T-cell (primary cell): ENCODE measurements at regions of chr2 and their contacts with region 1.

Region 1: DNA sequence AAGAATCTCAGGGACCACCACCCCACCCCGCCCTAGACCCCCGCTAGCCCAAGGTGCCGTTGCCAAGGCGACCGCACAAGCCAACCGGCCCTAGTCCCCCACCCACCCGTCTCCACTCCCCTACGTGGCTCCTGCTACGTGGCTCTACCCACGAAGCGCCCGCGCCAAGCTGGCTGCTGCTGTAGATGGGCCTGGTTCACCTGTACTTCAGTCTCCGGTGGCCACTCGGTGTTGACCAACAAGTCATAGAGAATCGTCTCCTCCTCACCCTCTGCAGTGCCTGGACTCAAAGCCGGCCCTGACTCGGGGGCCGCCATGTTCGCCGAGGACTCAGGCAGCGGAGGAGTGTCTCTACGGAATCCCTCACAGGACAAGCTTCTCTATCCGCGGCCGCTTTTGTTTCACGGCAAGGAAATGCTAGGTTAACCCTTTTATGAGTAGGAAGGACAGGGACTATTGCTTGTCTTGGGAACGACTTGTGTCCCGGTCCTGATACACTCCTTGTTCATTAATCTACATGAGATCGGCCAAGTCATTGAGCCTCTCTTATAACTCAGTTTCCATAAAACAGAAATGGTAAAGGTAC is at the start of gene NBAS:
- DNase-seq: peak; percentile 45 to 84 (median 69)
- ATAC-seq: peak; percentile 83 to 89 (median 88)
- H3K4me3 ChIP-seq: peak within 1 kb of the TSS; percentile 83 to 91
- H3K4me3 Mint-ChIP-seq: peak within 1 kb of the TSS; percentile 98 to 100 (median 100)
- H3K27ac ChIP-seq: peak within 1 kb of the TSS; percentile 72
- H3K27ac Mint-ChIP-seq: peak within 1 kb of the TSS; percentile 87 to 96
- H3K4me1 ChIP-seq: peaks cover 12 to 16% of the 10 kb centered on the region in 2 experiments
- H3K4me1 Mint-ChIP-seq: peaks cover 39 to 53% (median 41%) of the 10 kb centered on the region in 3 donors
- H3K27me3 ChIP-seq: no peaks in the 10 kb centered on the region
- H3K27me3 Mint-ChIP-seq: peaks cover 0 to 3% of the 10 kb centered on the region in 2 donors
- total RNA-seq, gene NBAS: 32.0 to 36.6 (median 33.1) TPM

Region 2: GRCh38 chr2:14577843-14578242 is 983.2 kb before region 1 on chr2:
- CTCF ChIA-PET with region 1: interaction called in 1 of 2 experiments, 10 read pairs
- POLR2A ChIA-PET with region 1: no interaction called
- DNase-seq: no peak
- ATAC-seq: no peak
- H3K4me3 ChIP-seq: no peak overlapping the region
- H3K4me3 Mint-ChIP-seq: no peak overlapping the region
- H3K27ac ChIP-seq: no peak overlapping the region
- H3K27ac Mint-ChIP-seq: no peak overlapping the region
- H3K4me1 ChIP-seq: no peaks in the 10 kb centered on the region
- H3K4me1 Mint-ChIP-seq: no peaks in the 10 kb centered on the region
- H3K27me3 ChIP-seq: no peaks in the 10 kb centered on the region
- H3K27me3 Mint-ChIP-seq: no peaks in the 10 kb centered on the region

Region 3: DNA sequence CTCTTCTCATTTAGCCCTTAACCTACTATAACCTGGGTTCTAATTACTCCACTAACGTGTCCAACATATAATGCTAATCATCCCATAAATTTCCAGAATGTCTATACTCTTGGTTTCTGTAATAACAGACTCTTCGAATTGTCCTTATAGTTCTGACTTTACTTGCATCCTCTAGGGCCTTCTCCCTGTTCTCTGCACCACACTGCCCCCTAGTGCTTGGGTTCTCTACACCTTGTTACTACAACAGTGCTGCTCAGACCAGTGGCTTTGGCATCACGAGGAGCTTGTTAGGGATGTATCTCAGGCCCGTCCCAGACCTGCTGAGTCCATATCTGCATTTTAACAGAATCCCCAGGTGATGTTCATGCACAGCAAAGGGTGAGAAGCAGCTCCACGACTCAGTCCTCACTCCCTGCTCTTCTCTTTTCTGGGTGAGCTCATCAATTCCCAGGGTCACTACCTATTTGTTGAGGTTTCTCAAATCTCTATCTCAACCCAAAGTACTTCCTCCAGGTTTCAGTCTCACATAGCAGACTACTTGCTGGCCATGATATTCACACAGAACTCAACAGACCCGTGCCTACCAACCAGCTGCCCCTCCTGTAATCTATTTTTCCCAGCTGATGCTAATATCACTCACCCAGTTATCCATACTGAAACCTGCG is 16.1 kb after region 1 on chr2:
- CTCF ChIA-PET with region 1: interaction called, 5 to 18 read pairs
- POLR2A ChIA-PET with region 1: no interaction called
- DNase-seq: peak; percentile 57 to 91 (median 82)
- ATAC-seq: peak; percentile 92 to 99 (median 95)
- H3K4me3 ChIP-seq: no peak overlapping the region
- H3K4me3 Mint-ChIP-seq: no peak overlapping the region
- H3K27ac ChIP-seq: no peak overlapping the region
- H3K27ac Mint-ChIP-seq: no peak overlapping the region
- H3K4me1 ChIP-seq: peaks cover 0 to 2% of the 10 kb centered on the region in 2 experiments
- H3K4me1 Mint-ChIP-seq: no peaks in the 10 kb centered on the region
- H3K27me3 ChIP-seq: peaks cover 0 to 3% of the 10 kb centered on the region in 2 experiments
- H3K27me3 Mint-ChIP-seq: peaks cover 5 to 9% of the 10 kb centered on the region in 2 donors

Region 4: DNA sequence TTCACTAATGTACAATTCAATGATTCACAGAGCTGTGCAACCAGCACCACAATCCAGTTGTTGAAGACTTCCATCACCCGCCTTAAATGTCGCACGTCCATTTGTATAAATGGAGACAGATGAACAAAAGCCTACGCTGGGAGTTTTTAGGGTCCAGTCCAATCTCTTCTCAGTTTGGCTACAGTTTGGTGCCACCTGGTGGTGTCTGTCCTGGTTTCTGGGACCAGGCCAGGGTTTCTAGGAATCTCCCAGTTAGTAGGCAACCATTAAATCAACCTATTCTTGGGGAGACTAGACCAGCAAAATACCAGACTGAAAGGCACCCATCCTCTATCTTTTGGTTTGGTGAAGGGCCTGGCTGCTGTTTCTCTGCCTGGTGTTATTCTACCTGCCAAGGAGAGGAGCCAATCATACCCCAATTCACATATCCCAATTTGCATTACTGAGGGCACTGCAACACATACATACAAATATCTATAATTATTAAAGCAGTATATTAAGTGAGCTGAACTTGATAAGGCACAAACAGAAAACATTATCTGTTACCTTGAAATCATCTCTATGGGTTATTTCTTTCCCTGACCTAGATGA is 27.3 kb after region 1 on chr2:
- CTCF ChIA-PET with region 1: no interaction called
- POLR2A ChIA-PET with region 1: interaction called, 3 to 19 read pairs
- DNase-seq: peak in 12 of 35 experiments; percentile 2 to 35 (median 8)
- ATAC-seq: no peak
- H3K4me3 ChIP-seq: no peak overlapping the region
- H3K4me3 Mint-ChIP-seq: no peak overlapping the region
- H3K27ac ChIP-seq: no peak overlapping the region
- H3K27ac Mint-ChIP-seq: no peak overlapping the region
- H3K4me1 ChIP-seq: peaks cover 8 to 16% of the 10 kb centered on the region in 2 experiments
- H3K4me1 Mint-ChIP-seq: peaks cover 18 to 26% (median 21%) of the 10 kb centered on the region in 3 donors
- H3K27me3 ChIP-seq: no peaks in the 10 kb centered on the region
- H3K27me3 Mint-ChIP-seq: peaks cover 4 to 10% of the 10 kb centered on the region in 2 donors

Region 5: DNA sequence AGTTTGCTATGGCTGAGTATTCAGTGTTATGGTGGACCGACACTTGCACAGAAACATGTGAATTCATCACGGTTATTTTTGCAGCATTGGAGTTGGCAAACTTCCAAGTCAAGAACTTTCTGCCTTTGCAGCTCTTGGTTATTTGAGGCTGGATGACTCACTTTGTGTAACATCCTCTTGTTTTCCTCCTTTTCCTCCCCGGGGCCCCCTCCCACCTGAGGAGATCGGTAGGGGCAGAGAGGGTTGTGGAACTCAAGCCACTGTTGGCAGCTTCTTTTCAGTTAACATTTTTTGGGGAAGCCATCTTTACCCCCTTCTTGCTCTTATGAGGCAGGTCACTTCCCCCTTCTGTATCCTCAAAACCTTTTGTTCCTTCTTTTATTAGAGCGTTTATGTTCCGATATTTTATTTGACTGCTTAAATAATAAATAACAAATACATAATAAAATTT is 79.2 kb after region 1 on chr2:
- CTCF ChIA-PET with region 1: interaction called in 1 of 2 experiments, 11 read pairs
- POLR2A ChIA-PET with region 1: no interaction called
- DNase-seq: no peak
- ATAC-seq: no peak
- H3K4me3 ChIP-seq: no peak overlapping the region
- H3K4me3 Mint-ChIP-seq: no peak overlapping the region
- H3K27ac ChIP-seq: no peak overlapping the region
- H3K27ac Mint-ChIP-seq: no peak overlapping the region
- H3K4me1 ChIP-seq: no peaks in the 10 kb centered on the region
- H3K4me1 Mint-ChIP-seq: peaks cover 0 to 7% (median 0%) of the 10 kb centered on the region in 3 donors
- H3K27me3 ChIP-seq: no peaks in the 10 kb centered on the region
- H3K27me3 Mint-ChIP-seq: peaks cover 0 to 1% of the 10 kb centered on the region in 2 donors